ENCODE measurements at regions of chr10 and their contacts with region 1.

Region 1: DNA sequence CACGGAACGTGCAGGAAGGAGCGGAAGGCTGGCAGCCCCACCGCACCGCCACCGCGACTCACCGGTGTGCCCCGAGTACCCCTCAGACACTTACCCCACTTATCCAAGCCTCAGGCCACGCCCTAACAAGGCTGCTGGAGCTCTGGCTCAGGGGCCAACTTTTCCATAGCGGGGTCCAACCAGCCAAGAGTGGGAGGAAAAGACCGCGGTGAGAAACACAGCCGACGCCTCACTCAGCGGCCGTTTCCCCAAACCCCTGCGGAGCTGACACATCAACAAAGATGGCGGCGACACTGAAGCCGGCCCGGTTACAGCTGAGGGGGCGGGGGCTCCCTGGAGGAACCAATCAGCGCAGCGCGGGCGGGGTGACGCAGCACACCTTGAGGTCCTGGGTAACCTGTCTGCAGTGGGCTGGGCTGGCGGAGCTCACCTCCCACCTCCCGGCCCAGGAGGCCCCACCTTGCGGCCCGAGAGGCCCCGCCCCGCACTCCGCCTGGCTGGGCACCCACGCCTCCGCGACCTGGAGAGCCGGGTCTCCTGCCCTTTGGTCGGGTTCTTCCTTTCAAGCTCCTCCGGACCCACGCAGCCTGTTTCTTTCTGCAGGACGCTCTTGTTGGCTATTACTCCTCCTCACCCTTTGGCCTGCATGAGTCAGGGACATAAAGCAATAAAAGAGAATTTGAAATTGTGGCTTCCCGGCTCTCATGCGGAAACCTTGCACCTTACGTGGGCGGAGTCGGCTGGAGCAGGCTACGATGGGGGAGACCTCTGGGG is at the start of gene CCDC186:
- DNase-seq: peak; percentile 91 to 94 (median 91)
- H3K4me3 ChIP-seq: peak within 1 kb of the TSS; percentile 97
- H3K27ac ChIP-seq: peak within 1 kb of the TSS; percentile 90 to 92
- H3K4me1 ChIP-seq: no peaks in the 10 kb centered on the region
- H3K27me3 ChIP-seq: no peaks in the 10 kb centered on the region
- CTCF ChIP-seq: no peak
- EP300 ChIP-seq: no peak
- POLR2A ChIP-seq: peak; percentile 53
- total RNA-seq, gene CCDC186: 15.7 to 31.2 (median 18.6) TPM

Region 2: GRCh38 chr10:114266520-114266919 is 92.4 kb after region 1 on chr10:
- intact Hi-C with region 1: loop called in 1 of 4 experiments (anchors 10 kb)
- DNase-seq: no peak
- H3K4me3 ChIP-seq: no peak overlapping the region
- H3K27ac ChIP-seq: no peak overlapping the region
- H3K4me1 ChIP-seq: no peaks in the 10 kb centered on the region
- H3K27me3 ChIP-seq: no peaks in the 10 kb centered on the region
- CTCF ChIP-seq: no peak
- EP300 ChIP-seq: no peak
- POLR2A ChIP-seq: no peak

Region 3: GRCh38 chr10:114288424-114289095 is 114.5 kb after region 1 on chr10:
- intact Hi-C with region 1: no loop called
- DNase-seq: no peak
- H3K4me3 ChIP-seq: no peak overlapping the region
- H3K27ac ChIP-seq: no peak overlapping the region
- H3K4me1 ChIP-seq: no peaks in the 10 kb centered on the region
- H3K27me3 ChIP-seq: no peaks in the 10 kb centered on the region
- CTCF ChIP-seq: no peak
- EP300 ChIP-seq: no peak
- POLR2A ChIP-seq: no peak